Activated CD8-positive, alpha-beta T cell treated with anti-CD3 and anti-CD28 coated beads for 36 hours (primary cell): ENCODE measurements at regions of chr13 and their contacts with region 1.

Region 1: GRCh38 chr13:27270594-27271520 is at the start of gene RASL11A:
- DNase-seq: peak; percentile 64
- ATAC-seq: peak; percentile 91
- H3K4me3 Mint-ChIP-seq: peak within 1 kb of the TSS; percentile 77
- H3K27ac Mint-ChIP-seq: no peak within 1 kb of the TSS
- H3K4me1 Mint-ChIP-seq: peaks cover 6% of the 10 kb centered on the region
- H3K27me3 Mint-ChIP-seq: no peaks in the 10 kb centered on the region
- CTCF ChIP-seq: peak; percentile 100
- total RNA-seq, gene RASL11A: 2.7 to 3.1 TPM

Region 2: DNA sequence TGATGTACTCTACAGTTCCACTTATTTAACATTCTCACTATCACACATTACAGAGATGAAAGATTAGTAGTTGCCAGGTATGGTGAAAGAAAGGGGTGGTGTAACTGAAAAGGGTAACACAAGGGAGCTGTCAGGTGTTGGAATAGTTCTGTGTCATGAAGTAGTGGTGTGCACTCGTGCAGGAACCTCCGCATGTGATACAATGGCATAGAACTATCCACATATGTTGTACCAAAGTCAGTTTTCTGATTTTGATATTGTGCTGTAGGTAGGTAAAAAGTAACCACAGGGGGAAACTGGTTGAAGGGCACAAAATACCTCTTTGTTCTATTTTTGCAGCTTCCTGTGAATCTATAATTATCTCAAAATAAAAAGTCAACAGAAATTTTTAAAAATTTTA is 43.9 kb before region 1 on chr13:
- CTCF ChIA-PET with region 1: no interaction called
- POLR2A ChIA-PET with region 1: no interaction called
- intact Hi-C with region 1: no loop called
- DNase-seq: no peak
- ATAC-seq: peak; percentile 56
- H3K4me3 Mint-ChIP-seq: no peak overlapping the region
- H3K27ac Mint-ChIP-seq: no peak overlapping the region
- H3K4me1 Mint-ChIP-seq: peaks cover 13% of the 10 kb centered on the region
- H3K27me3 Mint-ChIP-seq: peaks cover 4% of the 10 kb centered on the region
- CTCF ChIP-seq: no peak

Region 3: GRCh38 chr13:27259831-27260230 is 11.0 kb before region 1 on chr13:
- CTCF ChIA-PET with region 1: interaction called, 30 read pairs
- POLR2A ChIA-PET with region 1: interaction called, 93 read pairs
- intact Hi-C with region 1: no loop called
- DNase-seq: no peak
- ATAC-seq: no peak
- H3K4me3 Mint-ChIP-seq: no peak overlapping the region
- H3K27ac Mint-ChIP-seq: peak overlapping the region; percentile 81
- H3K4me1 Mint-ChIP-seq: peaks cover 76% of the 10 kb centered on the region
- H3K27me3 Mint-ChIP-seq: no peaks in the 10 kb centered on the region
- CTCF ChIP-seq: no peak

Region 4: GRCh38 chr13:27321468-27322431 is 50.9 kb after region 1 on chr13:
- CTCF ChIA-PET with region 1: no interaction called
- POLR2A ChIA-PET with region 1: no interaction called
- intact Hi-C with region 1: no loop called
- DNase-seq: peak; percentile 28
- ATAC-seq: peak; percentile 91
- H3K4me3 Mint-ChIP-seq: no peak overlapping the region
- H3K27ac Mint-ChIP-seq: no peak overlapping the region
- H3K4me1 Mint-ChIP-seq: peaks cover 16% of the 10 kb centered on the region
- H3K27me3 Mint-ChIP-seq: peaks cover 6% of the 10 kb centered on the region
- CTCF ChIP-seq: no peak

Region 5: GRCh38 chr13:27353166-27353583 is 82.3 kb after region 1 on chr13:
- CTCF ChIA-PET with region 1: interaction called, 32 read pairs
- POLR2A ChIA-PET with region 1: no interaction called
- intact Hi-C with region 1: loop called (anchors 5 kb)
- DNase-seq: peak; percentile 55
- ATAC-seq: peak; percentile 91
- H3K4me3 Mint-ChIP-seq: no peak overlapping the region
- H3K27ac Mint-ChIP-seq: no peak overlapping the region
- H3K4me1 Mint-ChIP-seq: peaks cover 10% of the 10 kb centered on the region
- H3K27me3 Mint-ChIP-seq: no peaks in the 10 kb centered on the region
- CTCF ChIP-seq: no peak